Posterior cingulate gyrus (tissue), 11 donors: ENCODE measurements at regions of chr3 and their contacts with region 1.

Region 1: GRCh38 chr3:84974347-84974746 is 15.6 kb downstream of the CADM2 start:
- DNase-seq: no peak

Region 2: GRCh38 chr3:84943379-84943778 is 31.0 kb before region 1 on chr3:
- intact Hi-C with region 1: no loop called
- DNase-seq: no peak

Region 3: GRCh38 chr3:85342915-85343314 is 368.6 kb after region 1 on chr3:
- intact Hi-C with region 1: loop called (anchors 5 kb)
- DNase-seq: peak in 3 of 10 donors; percentile 17 to 50 (median 48)

Region 4: DNA sequence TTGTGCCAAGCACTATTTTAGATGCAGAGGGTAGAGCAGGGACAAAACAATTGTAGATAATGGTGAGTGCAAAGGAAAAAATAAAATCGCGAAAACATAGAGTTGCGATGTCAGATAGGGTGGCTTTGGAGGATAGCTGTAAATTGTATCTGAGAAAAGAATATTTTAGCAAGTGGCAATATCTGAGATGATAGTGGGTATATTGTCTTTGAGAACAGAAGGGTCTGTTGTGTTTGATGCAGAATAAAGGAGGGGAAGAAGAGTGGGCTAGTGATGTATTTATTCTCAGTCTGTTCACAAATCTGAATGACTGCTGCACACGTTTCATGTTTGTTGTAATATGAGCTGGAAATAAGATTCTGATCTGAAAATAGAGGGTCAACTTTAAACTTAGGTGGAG is 381.2 kb after region 1 on chr3:
- intact Hi-C with region 1: loop called (anchors 5 kb)
- DNase-seq: no peak